ENCODE measurements at regions of chr19 and their contacts with region 1.

Region 1: DNA sequence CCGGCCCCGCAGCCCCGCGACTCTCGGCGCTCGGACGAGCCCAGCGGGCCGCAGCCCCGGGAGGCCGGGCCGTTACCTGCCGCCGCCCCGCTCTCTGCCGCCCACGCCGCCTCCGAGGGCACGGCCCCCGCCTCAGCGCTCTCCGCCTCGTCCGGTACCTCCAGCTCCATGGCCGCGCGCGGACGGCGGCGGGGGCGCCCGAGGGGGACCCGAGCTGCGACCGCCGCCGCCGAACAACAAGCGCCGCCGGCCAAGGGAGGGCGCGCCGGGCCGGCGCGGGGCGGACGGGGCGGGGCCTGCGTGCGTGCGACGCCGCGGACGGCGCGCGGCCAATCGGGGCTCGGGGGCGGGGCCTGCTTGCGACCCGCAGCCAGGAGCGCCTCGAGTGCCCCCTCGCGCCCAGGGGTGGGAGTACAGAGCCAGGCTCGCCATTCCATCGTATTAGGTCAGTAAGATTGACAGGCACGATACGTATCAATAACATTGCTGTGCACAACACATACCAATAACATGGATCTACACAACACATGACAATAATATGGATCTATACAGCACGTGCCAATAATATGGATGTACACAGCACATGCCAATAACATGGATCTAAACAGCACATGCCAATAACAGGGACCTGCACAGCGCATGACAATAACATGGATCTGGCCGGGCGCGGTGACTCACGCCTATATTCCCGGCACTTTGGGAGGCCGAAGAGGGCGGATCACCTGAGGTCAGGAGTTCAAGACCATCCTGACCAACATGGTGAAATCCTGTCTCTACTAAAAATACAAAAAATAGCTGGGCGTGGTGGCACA is at the start of gene PIP5K1C:
- DNase-seq: peak; percentile 86 to 93 (median 90)
- H3K4me3 ChIP-seq: peak within 1 kb of the TSS; percentile 50 to 52
- H3K4me3 Mint-ChIP-seq: peak within 1 kb of the TSS; percentile 87 to 96 (median 90)
- H3K27ac ChIP-seq: peak within 1 kb of the TSS; percentile 47
- H3K27ac Mint-ChIP-seq: peak within 1 kb of the TSS; percentile 76 to 92 (median 89)
- H3K4me1 ChIP-seq: peaks cover 17% of the 10 kb centered on the region
- H3K4me1 Mint-ChIP-seq: peaks cover 11 to 38% (median 27%) of the 10 kb centered on the region in 4 donors
- H3K27me3 ChIP-seq: no peaks in the 10 kb centered on the region
- H3K27me3 Mint-ChIP-seq: no peaks in the 10 kb centered on the region
- total RNA-seq, gene PIP5K1C: 28.2 to 29.7 TPM

Region 2: DNA sequence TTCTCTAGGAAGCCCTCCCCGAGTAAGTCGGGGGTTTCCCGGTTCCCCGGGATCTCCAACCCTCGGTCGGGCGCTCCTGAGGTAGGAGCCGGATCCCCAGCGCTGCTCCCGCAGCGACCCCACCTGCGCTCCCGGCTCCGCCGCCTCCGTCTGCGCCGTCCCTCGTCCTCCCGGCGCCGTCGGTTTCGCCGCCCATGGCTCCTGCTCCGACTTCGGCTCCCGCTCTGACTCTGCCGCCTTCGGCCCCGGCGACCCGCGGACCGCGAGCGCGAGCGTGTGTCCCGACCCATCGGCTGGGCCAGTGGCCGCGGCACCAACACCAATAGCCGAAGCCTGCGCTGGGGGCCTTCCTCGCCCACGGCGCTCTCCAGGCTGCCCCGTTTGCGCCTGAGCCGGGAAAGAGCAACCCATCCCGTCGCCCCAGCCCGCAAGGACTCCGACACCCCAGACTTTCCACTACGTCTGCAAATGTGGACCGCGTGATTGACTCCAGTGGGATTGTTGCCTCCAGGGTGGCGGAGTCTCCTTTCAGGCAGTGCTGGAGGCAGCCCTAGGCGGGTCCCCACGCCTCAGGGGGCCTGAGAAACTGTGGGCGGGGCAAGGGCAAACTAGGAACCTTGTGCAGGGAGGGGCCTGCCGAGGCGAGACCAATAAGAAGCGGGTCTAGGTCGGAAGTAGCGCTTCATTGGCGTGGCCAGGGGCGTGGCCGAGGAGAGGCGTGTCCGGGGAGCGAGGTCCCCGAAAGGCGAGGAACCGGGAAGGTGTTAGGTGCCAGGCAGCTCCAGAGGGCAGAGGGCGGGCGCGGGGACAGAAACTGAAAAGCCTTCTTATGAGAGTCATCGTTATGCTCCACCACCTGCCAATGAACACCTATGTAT is 73.7 kb before region 1 on chr19 and contains the start of gene CACTIN:
- CTCF ChIA-PET with region 1: no interaction called
- POLR2A ChIA-PET with region 1: no interaction called
- intact Hi-C with region 1: loop called (anchors 1 kb)
- DNase-seq: peak; percentile 98 to 100 (median 99)
- H3K4me3 ChIP-seq: peak within 1 kb of the TSS; percentile 76 to 79
- H3K4me3 Mint-ChIP-seq: peak within 1 kb of the TSS; percentile 86 to 98 (median 96)
- H3K27ac ChIP-seq: peak within 1 kb of the TSS; percentile 87
- H3K27ac Mint-ChIP-seq: peak within 1 kb of the TSS; percentile 98 to 100 (median 99)
- H3K4me1 ChIP-seq: peaks cover 27% of the 10 kb centered on the region
- H3K4me1 Mint-ChIP-seq: peaks cover 13 to 34% (median 25%) of the 10 kb centered on the region in 4 donors
- H3K27me3 ChIP-seq: no peaks in the 10 kb centered on the region
- H3K27me3 Mint-ChIP-seq: no peaks in the 10 kb centered on the region
- total RNA-seq, gene CACTIN: 44.0 to 50.4 TPM

Region 3: DNA sequence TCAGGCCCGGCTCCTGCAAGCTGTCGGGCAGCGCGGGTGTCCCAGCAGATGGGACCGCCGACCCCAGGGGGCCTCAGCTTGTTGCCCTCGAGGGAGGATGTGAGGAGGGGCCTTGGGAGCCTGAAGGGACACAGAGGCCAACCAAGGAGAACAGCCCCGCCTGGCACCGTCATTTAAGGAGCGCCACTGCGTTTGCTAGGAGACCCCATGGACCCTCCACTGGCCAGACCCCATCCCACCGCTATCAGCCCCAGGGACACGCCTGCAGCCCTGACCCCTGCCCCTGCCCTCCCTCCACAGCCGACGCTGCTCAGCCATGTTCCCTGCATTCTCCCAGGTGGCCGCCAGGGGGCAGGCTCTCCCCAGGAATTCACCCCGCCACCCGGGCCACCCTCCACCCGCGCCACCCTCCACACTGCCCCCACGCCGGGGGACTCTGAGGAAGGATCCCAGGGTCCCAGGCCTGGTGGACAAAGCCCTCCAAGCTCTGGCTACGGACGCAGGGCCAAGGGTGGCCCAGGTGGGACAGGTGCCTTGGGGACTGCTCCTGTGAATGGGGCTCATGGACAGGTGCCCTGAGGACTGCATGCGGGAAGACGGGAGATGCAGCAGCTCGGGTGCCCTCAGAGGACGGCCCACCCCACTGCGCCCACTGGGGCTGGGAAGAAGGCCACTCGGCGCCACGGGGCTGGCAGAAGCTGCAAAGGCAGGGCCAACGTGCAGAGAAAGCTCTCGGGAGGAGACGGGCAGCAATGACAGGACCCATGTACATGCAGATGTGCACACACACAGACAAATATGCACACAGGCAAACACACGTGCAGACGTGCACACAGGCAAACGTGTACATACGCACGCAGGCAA is 34.5 kb before region 1 on chr19:
- CTCF ChIA-PET with region 1: interaction called, 36 read pairs
- POLR2A ChIA-PET with region 1: interaction called, 3 read pairs
- intact Hi-C with region 1: loop called (anchors 1 kb)
- DNase-seq: peak; percentile 69 to 80 (median 70)
- H3K4me3 ChIP-seq: no peak overlapping the region
- H3K4me3 Mint-ChIP-seq: no peak overlapping the region
- H3K27ac ChIP-seq: no peak overlapping the region
- H3K27ac Mint-ChIP-seq: peak overlapping the region in 3 of 7 donors; percentile 2 to 12 (median 4)
- H3K4me1 ChIP-seq: peaks cover 9% of the 10 kb centered on the region
- H3K4me1 Mint-ChIP-seq: peaks cover 4 to 12% (median 7%) of the 10 kb centered on the region in 4 donors
- H3K27me3 ChIP-seq: no peaks in the 10 kb centered on the region
- H3K27me3 Mint-ChIP-seq: no peaks in the 10 kb centered on the region